BJ (cell line): ENCODE measurements at regions of chr1 and their contacts with region 1.

Region 1: DNA sequence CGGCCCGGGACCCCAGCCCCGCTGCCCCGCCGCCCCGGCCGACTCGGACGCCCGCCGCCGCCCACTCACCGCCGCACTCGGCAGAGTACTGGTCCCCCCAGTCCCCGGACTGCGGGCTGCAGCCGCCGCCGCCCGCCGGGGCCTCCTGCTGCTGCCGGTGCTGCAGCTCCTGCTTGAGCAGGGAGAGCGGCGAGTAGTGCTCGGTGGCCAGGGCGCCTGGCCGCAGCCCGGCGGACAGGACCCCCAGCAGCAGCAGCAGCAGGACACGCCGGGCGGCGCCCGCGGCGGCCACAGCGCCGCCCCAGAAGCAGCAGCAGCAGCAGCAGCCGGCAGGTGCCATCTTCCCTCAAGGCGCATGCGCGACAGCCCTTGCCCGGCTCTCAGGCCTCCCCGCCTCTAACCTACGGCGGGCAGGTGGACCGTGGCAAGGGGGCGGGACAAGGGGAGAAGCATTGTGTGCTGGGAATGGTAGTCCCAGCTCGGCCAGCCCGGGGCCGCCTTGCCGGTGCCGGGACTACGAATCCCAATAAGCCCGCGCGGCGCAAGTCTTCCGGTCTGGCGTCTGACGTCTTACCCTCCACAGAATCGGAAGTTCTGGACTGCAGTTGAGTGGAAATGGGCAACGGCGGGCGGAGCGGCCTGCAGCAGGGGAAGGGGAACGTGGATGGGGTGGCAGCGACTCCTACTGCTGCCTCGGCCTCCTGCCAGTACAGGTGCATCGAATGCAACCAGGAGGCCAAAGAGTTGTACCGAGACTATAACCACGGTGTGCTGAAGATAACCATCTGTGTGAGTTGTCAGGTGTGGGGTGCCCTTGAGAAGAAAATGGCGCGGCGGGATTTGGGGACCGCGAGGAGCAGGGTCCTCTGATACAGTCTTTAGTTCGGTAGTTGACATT is at the starts of genes ARV1 and TTC13:
- DNase-seq: peak; percentile 96
- H3K4me3 ChIP-seq: peak within 1 kb of the TSS; percentile 79
- H3K27me3 ChIP-seq: no peaks in the 10 kb centered on the region
- CTCF ChIP-seq: peak; percentile 19; the same call in 1 of the 2 replicates
- polyA plus RNA-seq, gene ARV1: 14.1 and 30.7 TPM in 2 replicates
- polyA plus RNA-seq, gene TTC13: 7.4 and 12.5 TPM in 2 replicates

Region 2: DNA sequence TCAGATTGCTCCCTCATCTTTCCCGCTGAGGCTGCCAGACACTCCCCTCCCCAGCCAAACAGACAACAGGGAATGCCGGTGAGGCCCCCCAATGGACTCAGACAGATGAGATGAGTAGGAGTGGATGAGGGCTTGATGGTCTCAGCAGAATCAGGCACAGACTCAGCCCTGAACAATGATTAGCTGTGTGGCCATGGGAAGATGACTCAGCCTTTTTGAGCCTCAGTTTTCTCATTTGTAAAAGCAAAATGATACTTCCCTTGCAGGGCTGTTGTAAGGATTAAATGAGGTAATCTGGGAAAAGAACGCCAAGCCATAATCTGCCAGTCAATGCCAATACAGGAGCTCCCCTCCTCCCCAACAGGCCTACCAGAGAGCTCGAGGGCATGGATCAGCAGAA is 122.9 kb before region 1 on chr1:
- CTCF ChIA-PET with region 1: no interaction called
- POLR2A ChIA-PET with region 1: interaction called, 12 read pairs
- DNase-seq: no peak
- H3K4me3 ChIP-seq: no peak overlapping the region
- H3K27me3 ChIP-seq: no peaks in the 10 kb centered on the region
- CTCF ChIP-seq: no peak

Region 3: DNA sequence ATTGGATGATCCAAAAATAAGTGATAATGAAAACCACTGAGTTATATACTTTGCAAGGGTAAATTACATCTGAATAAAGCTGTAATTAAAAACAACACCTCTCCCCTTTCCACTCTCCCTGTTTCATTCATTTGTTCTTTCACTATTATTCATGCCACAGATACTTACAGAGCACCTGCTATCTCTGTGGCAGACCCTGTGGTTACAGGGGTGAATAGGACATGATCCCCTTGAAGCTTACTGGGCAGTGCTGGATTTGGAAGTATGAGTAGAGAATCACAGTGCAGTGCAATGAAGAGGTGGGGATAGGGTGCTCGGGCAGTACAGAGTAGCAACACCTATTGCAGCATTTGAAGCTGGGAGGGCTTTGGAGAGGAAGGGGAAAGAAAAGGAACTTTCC is 21.9 kb after region 1 on chr1:
- CTCF ChIA-PET with region 1: no interaction called
- POLR2A ChIA-PET with region 1: no interaction called
- DNase-seq: no peak
- H3K4me3 ChIP-seq: no peak overlapping the region
- H3K27me3 ChIP-seq: no peaks in the 10 kb centered on the region
- CTCF ChIP-seq: no peak